A549 (cell line): ENCODE measurements at regions of chr7 and their contacts with region 1.

Region 1: GRCh38 chr7:129764247-129765084 is 152.9 kb downstream of the NRF1 start:
- DNase-seq: no peak
- ATAC-seq: no peak
- H3K4me3 ChIP-seq: no peak overlapping the region
- H3K27ac ChIP-seq: no peak overlapping the region
- H3K4me1 ChIP-seq: no peaks in the 10 kb centered on the region
- CTCF ChIP-seq: no peak
- EP300 ChIP-seq: no peak
- POLR2A ChIP-seq: no peak
- RAD21 ChIP-seq: no peak

Region 2: GRCh38 chr7:129728875-129729467 is 35.5 kb before region 1 on chr7:
- CTCF ChIA-PET with region 1: no interaction called
- POLR2A ChIA-PET with region 1: no interaction called
- DNase-seq: no peak
- ATAC-seq: no peak
- H3K4me3 ChIP-seq: no peak overlapping the region
- H3K27ac ChIP-seq: no peak overlapping the region
- H3K4me1 ChIP-seq: no peaks in the 10 kb centered on the region
- CTCF ChIP-seq: no peak
- EP300 ChIP-seq: no peak
- POLR2A ChIP-seq: no peak
- RAD21 ChIP-seq: no peak

Region 3: DNA sequence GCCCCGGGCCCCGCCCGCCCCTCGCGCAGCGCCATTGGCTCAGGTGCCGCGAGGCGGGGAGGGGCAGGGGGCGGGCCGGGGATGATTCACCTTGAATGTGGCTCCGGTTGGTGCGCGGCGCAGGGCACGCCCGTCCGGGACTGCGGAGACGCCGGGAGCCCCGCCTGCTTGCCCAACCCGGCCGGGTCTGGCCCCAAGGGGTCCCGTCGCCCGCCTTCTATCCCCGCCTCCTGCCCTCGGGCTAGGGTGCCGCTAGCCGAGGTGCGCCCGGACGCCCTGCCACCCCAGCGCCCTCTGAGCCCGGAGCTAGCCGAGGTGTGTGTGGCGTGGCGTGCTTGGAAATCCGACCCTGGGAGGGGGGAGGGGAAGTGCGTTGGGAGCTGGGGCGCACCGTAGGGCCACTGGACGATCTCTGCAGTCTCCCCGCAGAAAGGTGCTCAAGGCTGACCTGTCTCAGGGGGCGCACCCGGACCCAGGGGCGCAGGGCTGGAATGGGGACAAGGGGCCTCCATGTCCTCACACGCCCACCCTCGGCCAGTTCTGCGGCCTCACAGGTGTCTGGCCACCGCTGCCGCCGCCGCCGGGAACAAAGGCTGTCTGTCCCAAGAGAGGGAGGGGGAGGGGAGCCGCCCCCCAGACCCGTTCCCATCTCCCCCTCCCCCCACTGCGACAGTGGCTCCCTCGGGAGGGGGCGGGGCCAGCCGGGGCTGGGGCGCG is 15.9 kb after region 1 on chr7:
- CTCF ChIA-PET with region 1: interaction called, 11 read pairs
- POLR2A ChIA-PET with region 1: no interaction called
- DNase-seq: peak; percentile 90 to 98
- ATAC-seq: peak; percentile 83 to 92
- H3K4me3 ChIP-seq: peak overlapping the region; percentile 69
- H3K27ac ChIP-seq: peak overlapping the region; percentile 78 to 89
- H3K4me1 ChIP-seq: peaks cover 12% of the 10 kb centered on the region
- CTCF ChIP-seq: no peak
- EP300 ChIP-seq: no peak
- POLR2A ChIP-seq: no peak
- RAD21 ChIP-seq: no peak